GM10248 (cell line): ENCODE measurements at regions of chr7 and their contacts with region 1.

Region 1: DNA sequence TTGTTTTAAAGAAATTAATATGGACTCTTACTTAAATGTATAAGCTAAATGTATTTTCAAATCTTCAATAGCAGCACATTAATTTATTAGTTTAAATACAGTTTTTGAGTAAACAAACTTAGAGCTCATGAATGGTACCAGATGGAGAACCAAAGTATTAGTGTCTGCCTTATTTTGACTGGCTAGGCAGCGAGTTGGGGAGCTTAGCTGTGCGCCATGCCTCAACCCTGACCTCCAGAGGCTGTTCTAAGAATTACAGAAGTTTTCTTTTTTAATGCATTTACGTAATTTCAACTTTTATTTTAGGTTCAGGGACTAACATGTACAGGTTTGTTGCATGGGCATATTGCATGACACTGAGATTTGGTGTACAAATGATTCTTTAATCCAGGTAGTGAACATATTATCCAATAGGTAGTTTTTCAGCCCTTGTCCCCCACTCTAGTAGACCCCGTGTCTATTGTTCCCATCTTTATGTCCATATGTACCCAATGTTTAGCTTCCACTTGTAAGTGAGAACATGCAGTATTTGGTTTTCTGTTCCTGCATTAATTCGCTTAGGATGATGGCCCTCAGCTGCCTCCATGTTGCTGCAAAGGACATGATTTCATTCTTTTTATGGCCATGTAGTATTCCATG is 166.8 kb downstream of the IQUB start:
- DNase-seq: peak; percentile 53
- CTCF ChIP-seq: peak; percentile 75

Region 2: DNA sequence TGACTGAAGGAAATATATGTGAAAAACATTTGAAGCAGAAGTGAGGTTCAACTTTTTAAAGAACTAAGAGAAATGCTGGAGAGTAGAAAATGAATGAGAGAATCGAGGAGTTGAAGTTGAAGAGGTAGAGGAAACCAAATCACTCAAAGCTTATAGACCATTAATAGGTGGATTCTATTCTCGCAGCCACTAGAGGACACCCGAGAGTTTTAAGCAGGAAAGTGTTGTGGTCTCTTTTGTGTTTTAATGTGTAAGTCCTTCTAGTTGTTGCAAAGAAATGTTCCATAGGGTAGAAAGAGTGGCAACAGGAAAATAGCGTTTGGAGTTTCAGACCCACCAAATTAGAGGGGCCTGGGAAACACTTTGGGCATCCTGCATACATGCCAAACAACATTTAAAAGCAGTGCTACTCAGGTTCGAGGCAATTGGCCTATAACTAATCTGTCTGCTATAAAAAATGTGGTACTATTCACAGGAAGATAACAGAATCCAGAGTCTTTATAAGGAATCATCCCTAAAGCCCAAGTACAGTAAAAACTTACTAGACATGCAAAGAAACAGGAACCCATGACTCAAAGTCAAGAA is 296.8 kb before region 1 on chr7:
- CTCF ChIA-PET with region 1: interaction called, 11 read pairs
- POLR2A ChIA-PET with region 1: no interaction called
- DNase-seq: peak; percentile 22
- CTCF ChIP-seq: peak; percentile 50

Region 3: DNA sequence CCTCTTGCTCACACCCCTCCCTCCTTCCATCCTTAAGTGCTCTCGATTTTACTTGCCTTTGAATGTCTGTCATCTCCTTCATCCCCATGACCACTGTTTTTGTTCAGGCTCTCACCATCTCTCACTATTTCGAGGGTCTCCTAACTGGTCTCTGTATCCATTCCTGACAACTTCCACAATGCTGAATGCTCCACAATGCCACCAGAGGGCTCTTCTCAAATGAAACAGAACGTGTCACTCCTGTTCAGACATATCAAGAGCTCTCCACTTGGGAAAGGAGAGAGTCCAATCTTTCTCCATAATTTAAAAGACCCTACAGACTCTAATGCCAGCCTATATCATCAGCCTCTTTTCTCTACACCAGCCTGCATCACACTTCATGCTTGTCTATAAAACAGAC is 158.8 kb before region 1 on chr7:
- CTCF ChIA-PET with region 1: interaction called, 23 read pairs
- POLR2A ChIA-PET with region 1: no interaction called
- DNase-seq: no peak
- CTCF ChIP-seq: peak; percentile 14

Region 4: DNA sequence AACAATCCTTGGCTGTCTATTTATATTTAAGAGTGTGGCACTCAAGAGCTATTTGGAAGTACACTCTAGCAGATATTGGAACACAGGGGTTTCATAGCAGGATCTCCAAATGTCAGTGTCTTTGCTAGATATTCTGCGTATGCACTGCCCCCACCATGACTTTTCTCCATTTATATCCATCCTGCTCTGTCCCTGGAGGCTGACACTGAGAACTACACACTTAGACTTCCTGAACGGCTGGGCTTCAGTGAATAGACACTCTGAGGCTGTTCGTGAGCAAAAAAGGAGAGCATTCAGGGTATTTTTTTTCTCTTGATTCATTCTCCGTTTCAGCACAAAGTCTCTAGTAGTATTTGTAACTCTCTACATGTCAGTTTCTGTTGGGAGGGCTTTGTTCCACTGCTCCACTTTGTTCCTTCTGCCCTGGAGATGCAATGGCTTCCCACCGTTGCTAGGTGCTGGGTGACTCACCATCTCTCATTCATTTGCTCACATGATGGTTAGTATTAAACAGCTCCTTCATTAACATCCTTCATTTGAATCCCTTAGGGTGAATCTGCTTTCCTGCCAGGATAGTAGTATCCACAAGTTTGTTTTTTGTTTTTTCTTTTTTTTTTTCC is 11.9 kb before region 1 on chr7:
- CTCF ChIA-PET with region 1: interaction called, 18 read pairs
- POLR2A ChIA-PET with region 1: no interaction called
- DNase-seq: no peak
- CTCF ChIP-seq: no peak

Region 5: DNA sequence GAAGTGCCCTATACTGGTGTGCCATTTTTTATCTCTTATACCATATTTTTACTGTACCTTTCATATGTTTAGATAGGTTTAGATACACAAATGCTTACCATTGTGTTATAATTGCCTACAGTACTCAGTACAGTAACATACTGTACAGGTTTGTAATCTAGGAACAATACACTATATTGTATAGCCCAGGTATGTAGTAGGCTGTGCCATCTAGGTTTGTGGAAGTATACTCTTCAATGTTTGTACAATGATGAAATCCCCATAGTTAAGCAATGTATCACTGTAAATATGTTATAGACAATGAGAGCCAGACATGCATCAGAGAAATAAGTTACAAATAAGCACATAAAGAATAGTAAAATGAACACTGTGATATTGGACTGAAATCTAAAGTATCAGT is 57.6 kb after region 1 on chr7:
- CTCF ChIA-PET with region 1: no interaction called
- POLR2A ChIA-PET with region 1: no interaction called
- DNase-seq: no peak
- CTCF ChIP-seq: no peak